A673 (cell line): ENCODE measurements at regions of chr11 and their contacts with region 1.

Region 1: DNA sequence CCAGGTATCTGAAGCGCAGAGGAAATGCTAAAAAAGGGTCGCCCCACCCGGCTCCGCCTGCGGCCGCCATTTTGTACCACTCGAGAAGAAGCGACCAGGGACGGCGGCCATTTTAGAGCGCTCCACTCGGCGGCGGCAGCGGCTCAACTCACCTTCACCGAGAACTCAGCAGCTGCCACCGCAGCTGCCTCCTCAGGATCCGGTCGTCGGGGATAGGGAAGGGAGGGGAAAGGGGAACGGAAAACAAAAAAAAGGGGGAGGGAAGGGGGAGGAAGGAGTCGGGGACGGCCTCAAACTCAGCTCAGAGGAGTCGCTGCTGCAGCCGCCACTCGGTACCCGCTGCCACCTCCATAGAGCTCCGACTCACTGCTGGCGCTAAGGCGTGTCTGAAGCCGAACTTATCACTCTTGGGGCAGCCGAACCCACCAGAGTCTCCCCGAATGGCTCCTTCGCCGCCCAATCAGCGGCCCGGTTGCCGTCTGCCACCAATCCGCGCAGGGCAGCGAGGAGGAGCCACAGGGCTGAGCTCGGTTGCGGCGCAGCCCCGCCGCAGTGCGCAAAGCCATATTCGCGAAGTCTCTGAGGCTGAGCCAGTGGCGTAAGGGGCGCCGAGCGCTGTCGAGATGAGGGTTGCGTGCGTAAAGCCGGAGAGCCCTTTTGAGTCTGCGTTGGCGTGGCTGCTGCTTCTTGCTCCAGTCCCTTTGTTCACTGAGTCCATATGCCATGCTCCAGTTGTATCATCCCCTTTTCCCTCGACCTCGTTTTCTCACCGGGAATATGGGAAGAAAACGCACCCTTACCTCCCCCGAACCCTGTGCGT is at the start of gene EIF4G2:
- DNase-seq: peak; percentile 99
- H3K4me3 ChIP-seq: peak within 1 kb of the TSS; percentile 94
- H3K27ac ChIP-seq: peak within 1 kb of the TSS; percentile 98
- H3K4me1 ChIP-seq: peaks cover 18% of the 10 kb centered on the region
- H3K27me3 ChIP-seq: no peaks in the 10 kb centered on the region
- CTCF ChIP-seq: no peak
- total RNA-seq, gene EIF4G2: 1,137 and 1,198 TPM in 2 replicates

Region 2: DNA sequence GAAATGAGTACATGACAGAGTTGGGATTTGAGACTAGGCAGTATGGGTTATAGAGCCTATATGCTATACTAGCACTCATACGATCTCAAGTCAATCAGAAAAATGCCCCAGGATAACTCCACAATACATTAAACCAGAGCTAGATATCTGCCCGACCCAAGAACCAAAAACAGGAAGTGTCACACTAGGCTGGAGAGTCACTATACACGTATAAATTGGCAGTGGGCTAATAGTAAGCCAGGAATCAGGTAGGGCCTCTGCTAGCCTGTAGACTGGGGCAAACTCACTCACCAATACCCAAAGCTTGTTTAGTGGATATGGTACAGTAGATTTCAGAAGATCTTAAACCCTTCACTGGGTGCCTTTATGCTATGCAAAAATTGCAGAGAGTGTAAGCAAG is 16.1 kb after region 1 on chr11:
- CTCF ChIA-PET with region 1: no interaction called
- POLR2A ChIA-PET with region 1: interaction called, 17 read pairs
- intact Hi-C with region 1: no loop called
- DNase-seq: no peak
- H3K4me3 ChIP-seq: no peak overlapping the region
- H3K27ac ChIP-seq: no peak overlapping the region
- H3K4me1 ChIP-seq: no peaks in the 10 kb centered on the region
- H3K27me3 ChIP-seq: no peaks in the 10 kb centered on the region
- CTCF ChIP-seq: no peak

Region 3: DNA sequence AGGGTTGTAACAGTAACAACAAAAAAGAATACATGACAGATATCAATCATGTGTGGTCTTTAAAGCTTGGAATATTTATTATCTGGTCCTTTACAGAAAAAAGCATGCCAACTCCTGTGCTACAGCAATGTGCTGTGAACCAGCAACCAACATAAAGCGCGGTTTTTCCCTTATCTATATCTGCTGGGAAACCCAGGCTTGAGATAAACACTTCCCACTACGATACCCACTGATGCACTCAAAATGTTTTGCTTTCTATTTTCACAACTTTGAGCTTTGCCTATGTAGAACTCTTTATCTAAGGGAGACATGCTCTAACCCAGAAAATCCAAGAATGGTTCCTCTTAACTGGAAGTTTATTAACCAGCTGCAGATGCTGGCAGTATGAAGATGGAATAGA is 30.1 kb after region 1 on chr11:
- CTCF ChIA-PET with region 1: no interaction called
- POLR2A ChIA-PET with region 1: interaction called, 13 read pairs
- intact Hi-C with region 1: no loop called
- DNase-seq: no peak
- H3K4me3 ChIP-seq: no peak overlapping the region
- H3K27ac ChIP-seq: no peak overlapping the region
- H3K4me1 ChIP-seq: no peaks in the 10 kb centered on the region
- H3K27me3 ChIP-seq: no peaks in the 10 kb centered on the region
- CTCF ChIP-seq: no peak

Region 4: GRCh38 chr11:10857709-10858438 is 49.1 kb after region 1 on chr11 and contains the start of gene ZBED5:
- CTCF ChIA-PET with region 1: interaction called, 3 read pairs
- POLR2A ChIA-PET with region 1: interaction called, 8 read pairs
- intact Hi-C with region 1: loop called (anchors 5 kb)
- DNase-seq: peak; percentile 98
- H3K4me3 ChIP-seq: peak within 1 kb of the TSS; percentile 83
- H3K27ac ChIP-seq: peak within 1 kb of the TSS; percentile 92
- H3K4me1 ChIP-seq: peaks cover 10% of the 10 kb centered on the region
- H3K27me3 ChIP-seq: no peaks in the 10 kb centered on the region
- CTCF ChIP-seq: no peak
- total RNA-seq, gene ZBED5: 40.2 and 43.5 TPM in 2 replicates

Region 5: DNA sequence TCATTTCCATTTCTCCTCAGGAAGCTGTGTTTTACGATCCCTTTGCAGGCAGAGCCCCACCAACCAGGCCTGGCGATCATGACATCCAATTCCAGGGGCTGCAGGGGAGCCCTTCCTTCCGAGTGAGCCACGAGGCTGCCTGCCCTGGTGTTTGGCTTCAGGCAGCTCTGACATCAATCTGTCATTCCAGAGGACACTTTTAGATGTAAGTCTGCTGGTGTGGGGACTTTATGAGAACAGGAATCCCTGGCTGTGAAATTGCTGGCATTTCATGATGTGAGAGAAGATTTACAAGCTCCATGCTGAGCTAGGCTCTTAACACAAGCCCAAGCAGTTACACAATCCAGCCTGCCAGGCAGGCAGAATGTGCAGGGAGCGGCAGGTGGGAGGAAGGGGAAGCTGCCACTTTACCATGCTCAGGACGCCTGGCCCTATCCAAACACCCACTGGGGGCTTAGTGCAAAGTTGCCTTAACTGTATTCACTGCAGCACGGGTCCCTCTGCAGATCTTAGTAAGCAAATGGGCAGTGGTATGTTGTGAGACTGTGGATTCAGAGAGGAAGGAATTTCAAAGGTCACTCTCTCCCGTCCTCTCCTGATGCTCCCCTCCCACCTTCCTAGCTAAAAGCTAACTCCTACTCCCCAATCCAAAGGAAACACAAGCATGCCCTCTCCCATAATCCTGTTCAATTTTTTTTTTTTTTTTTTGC is 1258.2 kb after region 1 on chr11:
- CTCF ChIA-PET with region 1: no interaction called
- POLR2A ChIA-PET with region 1: no interaction called
- intact Hi-C with region 1: no loop called
- DNase-seq: peak; percentile 94
- H3K4me3 ChIP-seq: no peak overlapping the region
- H3K27ac ChIP-seq: peak overlapping the region; percentile 55
- H3K4me1 ChIP-seq: peaks cover 26% of the 10 kb centered on the region
- H3K27me3 ChIP-seq: no peaks in the 10 kb centered on the region
- CTCF ChIP-seq: no peak